Activated T-helper 1 cell treated with anti-CD3 and anti-CD28 coated beads, Interleukin-12 subunit alpha, Interleukin-12 subunit beta, Interleukin-2, Interleukin-4 antibody, amounts not matched to agents 30 ng/mL and 10 ng/mL and 1 ng/mL, durations not matched to agents 14 hours and 24 hours and 36 hours (primary cell): ENCODE measurements at regions of chr18 and their contacts with region 1.

Region 1: GRCh38 chr18:712401-713134 is at the start of gene ENOSF1:
- DNase-seq: peak; percentile 84
- H3K4me3 Mint-ChIP-seq: peak within 1 kb of the TSS; percentile 86
- H3K27ac Mint-ChIP-seq: peak within 1 kb of the TSS; percentile 89
- H3K4me1 Mint-ChIP-seq: peaks cover 41% of the 10 kb centered on the region
- H3K27me3 Mint-ChIP-seq: no peaks in the 10 kb centered on the region
- total RNA-seq, gene ENOSF1: 84.4 and 96.1 TPM in 2 replicates

Region 2: GRCh38 chr18:596288-596881 is 116.2 kb before region 1 on chr18:
- intact Hi-C with region 1: loop called (anchors 1 kb)
- DNase-seq: no peak
- H3K4me3 Mint-ChIP-seq: no peak overlapping the region
- H3K27ac Mint-ChIP-seq: no peak overlapping the region
- H3K4me1 Mint-ChIP-seq: peaks cover 14% of the 10 kb centered on the region
- H3K27me3 Mint-ChIP-seq: peaks cover 20% of the 10 kb centered on the region

Region 3: DNA sequence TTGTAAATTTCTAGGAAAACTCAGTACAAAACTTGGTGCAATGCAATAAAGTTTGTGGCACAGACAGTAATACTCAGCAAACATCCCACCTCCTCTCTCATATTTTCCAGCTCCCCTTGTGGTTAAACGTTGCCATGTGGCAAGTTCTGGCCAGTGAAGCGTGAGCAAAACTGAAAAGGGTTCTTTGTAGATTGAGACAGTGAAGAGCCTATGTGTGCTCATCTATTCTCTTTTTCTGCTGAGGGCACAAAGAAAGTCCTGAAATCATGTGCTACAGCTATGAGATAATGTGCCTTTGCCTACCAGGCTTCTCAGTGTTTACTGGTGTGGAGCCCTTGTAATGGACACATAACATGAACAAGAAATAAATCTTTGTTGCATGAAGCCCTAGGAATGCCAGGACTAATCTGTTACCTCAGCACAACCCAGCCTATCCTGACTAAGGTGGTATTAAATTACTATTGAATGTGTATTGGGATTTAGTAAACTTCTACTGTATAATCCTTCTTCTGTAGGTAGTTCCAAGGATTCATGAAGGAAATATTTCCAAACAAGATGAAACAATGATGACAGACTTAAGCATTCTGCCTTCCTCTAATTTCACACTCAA is 68.1 kb before region 1 on chr18:
- intact Hi-C with region 1: loop called (anchors 1 kb)
- DNase-seq: no peak
- H3K4me3 Mint-ChIP-seq: no peak overlapping the region
- H3K27ac Mint-ChIP-seq: no peak overlapping the region
- H3K4me1 Mint-ChIP-seq: peaks cover 10% of the 10 kb centered on the region
- H3K27me3 Mint-ChIP-seq: peaks cover 10% of the 10 kb centered on the region

Region 4: DNA sequence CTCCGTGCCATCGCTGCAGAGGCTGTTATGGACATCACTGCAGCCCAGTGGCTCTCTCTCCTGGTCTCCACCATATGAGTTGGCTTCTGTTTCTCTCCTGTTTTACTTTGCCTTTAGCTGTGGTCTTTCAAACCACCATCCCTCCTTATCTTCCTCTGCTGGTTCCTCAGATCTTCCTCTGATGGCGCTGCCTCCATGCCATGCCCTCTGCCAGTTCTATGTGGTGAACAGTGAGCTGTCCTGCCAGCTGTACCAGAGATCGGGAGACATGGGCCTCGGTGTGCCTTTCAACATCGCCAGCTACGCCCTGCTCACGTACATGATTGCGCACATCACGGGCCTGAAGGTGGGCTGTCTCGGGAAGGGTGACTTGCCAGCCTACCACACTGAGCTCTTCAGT is 42.0 kb before region 1 on chr18:
- intact Hi-C with region 1: loop called (anchors 5 kb)
- DNase-seq: no peak
- H3K4me3 Mint-ChIP-seq: no peak overlapping the region
- H3K27ac Mint-ChIP-seq: peak overlapping the region; percentile 14
- H3K4me1 Mint-ChIP-seq: peaks cover 35% of the 10 kb centered on the region
- H3K27me3 Mint-ChIP-seq: no peaks in the 10 kb centered on the region

Region 5: DNA sequence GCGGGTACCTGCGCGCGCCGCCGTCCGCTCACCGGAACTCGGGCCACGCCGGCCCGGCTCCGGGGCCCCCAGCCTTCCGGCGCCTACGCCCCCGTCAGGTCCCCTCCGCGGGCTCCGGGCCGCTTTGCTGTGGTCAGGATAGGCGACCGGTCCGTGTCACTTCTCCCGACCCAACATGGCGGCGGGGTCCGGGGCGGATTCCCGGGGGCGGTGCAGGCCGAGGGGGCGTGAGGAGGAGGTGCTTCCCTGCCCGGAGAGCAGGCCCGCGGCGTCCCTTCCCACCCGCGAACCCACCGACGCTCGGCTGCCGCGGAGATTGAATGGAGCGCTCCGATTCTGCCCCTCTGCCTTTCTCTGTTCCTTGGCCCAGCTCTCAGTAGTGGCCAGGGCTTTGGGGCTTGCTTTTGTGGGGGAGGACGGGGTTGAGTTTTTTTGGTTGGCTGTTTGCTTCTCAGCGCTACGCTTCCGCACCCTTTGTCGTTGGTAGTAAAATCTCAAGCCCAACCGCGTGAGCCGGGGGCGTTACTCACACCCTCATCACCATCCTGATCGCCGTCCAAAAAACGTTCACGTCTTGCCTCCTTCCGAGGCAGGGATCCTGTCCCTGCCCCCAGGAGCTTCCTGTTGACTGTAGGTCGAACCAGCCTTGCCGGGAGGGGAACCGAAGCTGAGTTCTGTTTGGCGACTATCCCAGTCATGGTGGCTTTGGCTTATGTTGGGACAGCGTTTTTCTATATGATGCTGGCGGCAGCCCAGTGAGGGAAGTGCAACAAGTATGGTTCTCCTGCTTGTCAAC is 100.0 kb after region 1 on chr18:
- intact Hi-C with region 1: loop called (anchors 1 kb)
- DNase-seq: peak; percentile 81
- H3K4me3 Mint-ChIP-seq: peak overlapping the region; percentile 90
- H3K27ac Mint-ChIP-seq: peak overlapping the region; percentile 99
- H3K4me1 Mint-ChIP-seq: peaks cover 64% of the 10 kb centered on the region
- H3K27me3 Mint-ChIP-seq: no peaks in the 10 kb centered on the region

Region 6: DNA sequence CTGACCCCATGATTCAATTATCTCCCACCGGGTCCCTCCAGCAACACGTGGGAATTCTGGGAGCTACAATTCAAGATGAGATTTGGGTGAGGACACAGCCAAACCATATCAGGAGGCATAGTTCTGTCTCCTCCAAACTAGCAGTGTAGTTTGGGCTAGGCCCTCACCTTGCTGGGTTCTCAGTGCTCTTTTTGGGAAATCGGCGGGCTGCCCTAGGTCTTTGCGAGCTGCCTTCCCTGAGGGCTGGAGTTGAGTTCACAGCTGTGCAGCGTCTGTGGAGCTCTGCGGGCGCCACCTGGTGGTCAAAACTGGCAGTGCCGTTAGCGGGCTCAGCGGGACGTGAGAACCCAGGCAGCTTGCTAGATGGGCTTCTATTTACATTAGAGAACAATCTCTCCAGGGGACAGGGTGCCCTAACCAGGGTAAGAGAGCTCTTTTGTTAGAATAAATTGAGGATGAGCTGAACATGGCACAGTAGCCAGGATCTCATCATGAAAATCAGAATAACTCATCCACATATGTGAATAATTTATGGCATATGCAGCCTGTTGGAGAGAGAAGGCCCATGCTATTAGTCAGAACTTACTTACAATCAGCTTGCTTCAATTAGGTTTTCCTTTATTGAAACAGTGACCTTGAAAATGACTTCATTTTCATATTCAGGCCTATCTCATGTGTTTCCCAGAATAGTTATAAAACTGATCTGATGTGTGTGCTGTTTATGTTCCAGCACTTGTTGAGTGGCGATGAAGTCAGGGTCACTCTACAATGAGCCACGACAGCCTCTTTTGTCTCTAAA is 126.9 kb after region 1 on chr18:
- intact Hi-C with region 1: loop called (anchors 1 kb)
- DNase-seq: peak; percentile 75
- H3K4me3 Mint-ChIP-seq: no peak overlapping the region
- H3K27ac Mint-ChIP-seq: no peak overlapping the region
- H3K4me1 Mint-ChIP-seq: peaks cover 8% of the 10 kb centered on the region
- H3K27me3 Mint-ChIP-seq: peaks cover 10% of the 10 kb centered on the region